PC-9 (cell line): ENCODE measurements at regions of chr11 and their contacts with region 1.

Region 1: DNA sequence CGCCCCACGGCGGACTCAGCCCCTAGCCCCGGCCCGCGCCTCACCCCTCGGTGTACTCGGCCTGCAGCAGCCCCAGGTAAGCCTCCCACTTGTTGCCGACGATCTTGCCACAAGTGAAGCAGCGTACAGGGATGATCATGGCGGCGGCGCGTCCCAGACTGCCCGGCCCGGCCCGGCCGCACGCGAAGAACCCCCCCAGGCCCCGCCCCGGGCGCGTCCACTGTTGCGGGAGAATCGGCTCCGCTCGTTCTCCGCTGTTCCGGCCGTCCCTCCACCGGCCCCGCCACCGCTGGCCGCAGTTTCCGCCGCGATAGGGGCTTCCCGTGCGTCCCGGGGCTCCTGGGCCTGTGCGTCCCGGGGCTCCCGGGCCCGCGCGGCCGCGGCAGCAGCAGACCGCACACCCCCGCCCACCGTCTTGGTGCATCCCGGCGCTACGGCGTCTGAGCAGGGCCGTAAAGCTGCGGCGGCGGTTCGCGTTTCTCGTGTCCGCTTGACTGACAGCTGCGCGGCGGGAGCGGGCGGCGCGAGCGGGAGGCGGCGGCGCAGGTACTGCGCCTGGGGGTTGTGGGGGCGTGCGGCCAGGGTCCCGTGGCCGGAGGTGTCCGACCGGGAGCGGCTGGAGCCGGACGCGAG is at the starts of genes POLR2L and TSPAN4:
- DNase-seq: peak; percentile 59 to 73
- H3K4me3 ChIP-seq: peak within 1 kb of the TSS; percentile 78
- H3K27ac ChIP-seq: peak within 1 kb of the TSS; percentile 67
- H3K4me1 ChIP-seq: peaks cover 20% of the 10 kb centered on the region
- H3K27me3 ChIP-seq: no peaks in the 10 kb centered on the region
- CTCF ChIP-seq: no peak
- total RNA-seq, gene POLR2L: 87.4 and 99.7 TPM in 2 replicates
- total RNA-seq, gene TSPAN4: 30.4 and 43.6 TPM in 2 replicates

Region 2: DNA sequence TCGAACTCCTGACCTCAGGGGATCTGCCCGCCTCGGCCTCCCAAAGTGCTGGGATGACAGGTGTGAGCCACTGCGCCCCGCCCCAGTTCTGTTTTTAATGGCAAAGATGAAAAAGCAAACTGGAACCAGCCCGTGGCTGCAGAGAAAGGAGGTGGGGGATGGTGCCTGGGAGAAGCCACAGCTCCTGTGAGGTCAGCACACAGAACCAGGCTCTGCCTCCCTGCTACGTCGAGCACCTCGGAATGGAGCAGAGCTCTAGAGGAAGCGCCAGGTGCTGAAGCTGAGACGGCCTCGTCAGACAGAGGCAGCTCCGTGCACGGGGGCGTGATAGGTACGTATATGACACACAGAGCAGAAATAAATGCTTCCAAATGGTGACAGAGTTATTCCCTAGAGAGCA is 196.9 kb before region 1 on chr11:
- CTCF ChIA-PET with region 1: no interaction called
- POLR2A ChIA-PET with region 1: no interaction called
- intact Hi-C with region 1: no loop called
- DNase-seq: no peak
- H3K4me3 ChIP-seq: no peak overlapping the region
- H3K27ac ChIP-seq: no peak overlapping the region
- H3K4me1 ChIP-seq: no peaks in the 10 kb centered on the region
- H3K27me3 ChIP-seq: no peaks in the 10 kb centered on the region
- CTCF ChIP-seq: no peak

Region 3: DNA sequence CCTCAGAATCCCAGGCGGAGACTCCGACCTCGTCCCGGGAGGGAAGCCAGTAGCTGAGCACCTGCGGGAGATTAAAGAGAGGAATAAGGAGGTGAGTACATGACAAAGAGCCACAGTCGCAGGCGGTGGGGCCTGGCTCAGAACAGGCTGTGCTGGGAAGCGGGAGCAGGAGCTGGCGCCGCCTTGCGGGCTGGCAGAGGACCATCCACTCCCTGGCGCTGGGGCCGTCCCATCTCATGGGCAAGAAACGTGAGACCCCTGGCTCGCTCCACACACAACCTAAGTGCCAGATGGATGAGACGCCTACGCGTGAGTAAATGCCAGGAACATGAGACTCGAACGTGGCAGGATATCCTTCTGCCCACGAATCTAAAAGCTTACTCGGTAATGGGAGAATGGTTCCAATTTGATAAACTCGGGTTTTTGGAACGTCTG is 58.9 kb before region 1 on chr11:
- CTCF ChIA-PET with region 1: no interaction called
- POLR2A ChIA-PET with region 1: no interaction called
- intact Hi-C with region 1: no loop called
- DNase-seq: no peak
- H3K4me3 ChIP-seq: no peak overlapping the region
- H3K27ac ChIP-seq: no peak overlapping the region
- H3K4me1 ChIP-seq: no peaks in the 10 kb centered on the region
- H3K27me3 ChIP-seq: no peaks in the 10 kb centered on the region
- CTCF ChIP-seq: no peak

Region 4: DNA sequence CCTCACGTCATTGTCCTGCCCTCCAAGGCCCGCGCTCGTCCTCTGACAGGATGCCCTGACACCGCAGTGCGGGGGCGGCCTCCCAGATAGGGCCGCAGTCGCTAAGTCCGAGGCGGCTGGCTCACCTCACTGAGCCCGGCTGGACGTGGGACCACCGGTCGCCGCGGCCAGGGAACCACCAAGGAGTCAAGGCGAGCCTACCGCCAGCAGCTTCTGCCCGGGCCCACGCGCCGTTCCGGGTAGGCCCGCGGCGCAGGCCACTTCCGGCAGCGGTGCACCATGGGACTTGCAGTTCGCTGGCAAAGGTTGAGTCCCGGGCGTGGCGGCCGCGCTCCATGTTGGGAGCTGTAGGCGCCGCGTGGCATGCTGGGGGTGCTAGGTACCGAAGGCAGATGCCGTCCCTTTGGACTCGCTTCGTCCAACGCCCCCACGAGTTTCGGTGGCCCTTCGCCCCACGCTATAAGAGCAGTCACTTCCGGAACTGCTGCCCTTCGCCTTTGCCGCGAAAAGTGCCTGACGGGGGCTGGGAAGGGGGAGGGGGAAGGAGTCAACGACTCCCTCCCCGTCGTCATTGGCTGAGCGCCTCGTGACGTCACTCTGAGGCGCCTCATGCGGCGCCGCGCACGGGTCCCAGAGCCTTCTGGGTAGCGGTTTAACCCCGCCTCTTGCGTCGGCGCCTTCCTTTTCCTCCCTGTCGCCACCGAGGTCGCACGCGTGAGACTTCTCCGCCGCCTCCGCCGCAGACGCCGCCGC is 33.0 kb before region 1 on chr11 and contains the start of gene RPLP2:
- CTCF ChIA-PET with region 1: no interaction called
- POLR2A ChIA-PET with region 1: no interaction called
- intact Hi-C with region 1: loop called (anchors 5 kb)
- DNase-seq: peak; percentile 82 to 89
- H3K4me3 ChIP-seq: peak within 1 kb of the TSS; percentile 85
- H3K27ac ChIP-seq: peak within 1 kb of the TSS; percentile 89
- H3K4me1 ChIP-seq: peaks cover 9% of the 10 kb centered on the region; the same call in 1 of the 2 replicates
- H3K27me3 ChIP-seq: no peaks in the 10 kb centered on the region
- CTCF ChIP-seq: no peak
- total RNA-seq, gene RPLP2: 1,270 and 1,465 TPM in 2 replicates